Spleen (tissue), 13 donors: ENCODE measurements at regions of chr10 and their contacts with region 1.

Region 1: GRCh38 chr10:63217120-63217605 is 84.0 kb downstream of the NRBF2 start:
- DNase-seq: no peak
- H3K4me3 ChIP-seq: no peak overlapping the region
- H3K27ac ChIP-seq: peak overlapping the region in 3 of 8 donors; percentile 7 to 25 (median 17)
- H3K4me1 ChIP-seq: peaks cover 26 to 84% (median 61%) of the 10 kb centered on the region in 6 donors
- H3K27me3 ChIP-seq: no peaks in the 10 kb centered on the region
- CTCF ChIP-seq: peak; percentile 42 to 80 (median 75)
- POLR2A ChIP-seq: no peak

Region 2: DNA sequence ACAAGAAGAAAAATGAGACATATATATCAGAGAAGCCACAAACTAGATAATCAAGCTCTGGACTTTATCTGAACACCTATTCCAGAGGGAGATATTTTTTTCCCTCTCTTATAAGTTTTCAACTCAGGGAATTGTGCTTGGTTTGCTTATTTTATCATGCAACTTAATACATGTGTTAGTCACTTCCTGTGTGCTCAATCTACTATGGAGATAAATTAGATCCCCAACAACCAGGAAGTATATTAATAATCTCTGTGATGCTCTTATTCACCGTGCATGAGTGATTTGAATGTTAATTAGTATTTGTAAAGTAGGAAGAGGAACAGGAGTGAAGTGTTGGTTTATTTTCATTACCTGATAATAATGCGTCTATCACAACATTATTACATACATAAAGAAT is 881.8 kb before region 1 on chr10:
- intact Hi-C with region 1: no loop called
- DNase-seq: no peak
- H3K4me3 ChIP-seq: no peak overlapping the region
- H3K27ac ChIP-seq: no peak overlapping the region
- H3K4me1 ChIP-seq: peaks cover 0 to 20% (median 10%) of the 10 kb centered on the region in 6 donors
- H3K27me3 ChIP-seq: no peaks in the 10 kb centered on the region
- CTCF ChIP-seq: no peak
- POLR2A ChIP-seq: no peak

Region 3: GRCh38 chr10:63294781-63295180 is 77.6 kb after region 1 on chr10:
- intact Hi-C with region 1: no loop called
- DNase-seq: no peak
- H3K4me3 ChIP-seq: no peak overlapping the region
- H3K27ac ChIP-seq: peak overlapping the region in 1 of 8 donors; percentile 11
- H3K4me1 ChIP-seq: peaks cover 0 to 4% (median 0%) of the 10 kb centered on the region in 6 donors
- H3K27me3 ChIP-seq: no peaks in the 10 kb centered on the region
- CTCF ChIP-seq: no peak
- POLR2A ChIP-seq: no peak

Region 4: DNA sequence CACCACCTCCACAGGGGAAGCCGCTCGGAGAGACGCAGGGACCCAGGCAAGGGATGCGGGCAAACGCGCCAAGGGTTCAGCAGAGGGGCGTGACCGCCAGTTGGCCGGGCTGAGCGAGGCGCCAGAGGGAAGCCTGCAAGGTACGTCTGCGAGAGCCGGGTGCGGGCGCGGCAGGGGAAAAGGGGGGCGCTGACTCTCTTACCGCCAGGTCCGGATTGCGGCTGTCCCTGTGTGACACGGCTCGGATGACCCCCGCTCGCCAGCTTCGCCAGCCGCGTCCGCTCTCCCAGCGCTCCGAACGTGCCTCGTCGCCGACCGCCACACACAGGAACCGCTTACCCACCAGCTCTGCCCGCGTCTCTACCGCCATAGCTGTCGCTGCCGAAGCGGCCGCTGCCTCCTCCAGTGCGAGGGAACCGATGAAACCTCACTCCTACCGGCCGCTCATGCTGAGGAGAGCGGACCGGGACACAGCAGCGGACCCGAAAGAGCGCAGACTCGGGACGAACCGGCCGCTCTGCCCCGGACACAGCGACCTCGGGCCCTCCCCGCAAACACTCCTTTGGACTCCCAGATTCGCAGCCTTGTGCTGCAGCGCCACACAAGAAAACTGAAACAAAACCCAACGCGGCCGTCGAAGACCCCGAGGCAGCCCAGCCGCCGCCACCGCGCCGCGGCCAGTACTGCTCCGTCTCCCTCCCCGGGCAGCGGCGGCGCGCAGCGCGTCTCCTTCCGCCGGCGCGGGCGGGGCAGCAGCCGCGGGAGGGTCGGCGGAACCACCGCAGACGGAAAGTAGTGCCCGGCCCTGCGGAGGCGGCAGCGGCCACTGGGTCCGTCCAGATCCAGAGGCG is 248.4 kb after region 1 on chr10 and contains the start of gene JMJD1C:
- intact Hi-C with region 1: loop called (anchors 10 kb)
- DNase-seq: peak; percentile 95
- H3K4me3 ChIP-seq: peak within 1 kb of the TSS; percentile 70 to 93 (median 85)
- H3K27ac ChIP-seq: peak within 1 kb of the TSS; percentile 87 to 93 (median 91)
- H3K4me1 ChIP-seq: peaks cover 18 to 40% (median 20%) of the 10 kb centered on the region in 6 donors
- H3K27me3 ChIP-seq: no peaks in the 10 kb centered on the region
- CTCF ChIP-seq: no peak
- POLR2A ChIP-seq: peak; percentile 18 to 71 (median 48)
- total RNA-seq, gene JMJD1C: 125 to 272 (median 162) TPM

Region 5: DNA sequence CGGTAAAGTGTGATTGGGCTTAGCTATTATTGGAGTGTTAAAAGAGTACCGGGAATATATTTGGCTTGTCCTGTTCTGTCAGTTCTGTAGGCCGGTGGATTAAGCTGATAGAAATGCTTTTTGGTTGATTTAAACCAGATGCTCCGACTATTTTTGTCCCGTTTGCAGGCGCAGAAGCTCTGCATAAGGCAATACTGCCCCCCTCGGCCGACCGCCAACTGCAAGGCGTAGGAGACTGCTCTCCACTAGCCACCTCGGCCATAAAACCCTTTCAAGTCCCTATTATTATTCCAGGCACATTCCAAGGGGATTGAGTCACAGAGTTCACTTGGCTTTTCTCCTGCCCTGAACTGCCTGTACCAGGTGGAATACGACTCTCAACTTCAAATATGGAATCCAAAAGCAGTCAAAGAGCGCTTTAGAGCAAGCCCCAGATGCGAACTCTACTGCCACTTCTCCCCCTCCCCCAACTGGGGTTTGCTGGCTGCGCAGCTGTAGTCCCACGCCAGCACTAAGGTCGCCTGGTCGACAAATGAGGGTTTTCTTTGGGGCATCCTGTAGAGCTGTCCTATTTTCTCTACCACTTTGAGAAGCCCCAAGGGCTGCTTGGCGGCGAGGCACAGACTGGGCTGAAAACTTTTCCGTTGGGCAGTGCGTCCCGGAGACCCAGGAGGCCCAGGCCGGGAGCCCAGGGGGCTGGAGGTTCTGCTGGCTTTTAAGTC is 412.4 kb after region 1 on chr10:
- intact Hi-C with region 1: loop called (anchors 10 kb)
- DNase-seq: peak; percentile 96
- H3K4me3 ChIP-seq: peak overlapping the region; percentile 64 to 88 (median 75)
- H3K27ac ChIP-seq: peak overlapping the region; percentile 74 to 93 (median 88)
- H3K4me1 ChIP-seq: peaks cover 10 to 50% (median 38%) of the 10 kb centered on the region in 6 donors
- H3K27me3 ChIP-seq: no peaks in the 10 kb centered on the region
- CTCF ChIP-seq: peak; percentile 38 to 90 (median 83)
- POLR2A ChIP-seq: no peak